Posterior cingulate gyrus (tissue), 11 donors: ENCODE measurements at regions of chr14 and their contacts with region 1.

Region 1: DNA sequence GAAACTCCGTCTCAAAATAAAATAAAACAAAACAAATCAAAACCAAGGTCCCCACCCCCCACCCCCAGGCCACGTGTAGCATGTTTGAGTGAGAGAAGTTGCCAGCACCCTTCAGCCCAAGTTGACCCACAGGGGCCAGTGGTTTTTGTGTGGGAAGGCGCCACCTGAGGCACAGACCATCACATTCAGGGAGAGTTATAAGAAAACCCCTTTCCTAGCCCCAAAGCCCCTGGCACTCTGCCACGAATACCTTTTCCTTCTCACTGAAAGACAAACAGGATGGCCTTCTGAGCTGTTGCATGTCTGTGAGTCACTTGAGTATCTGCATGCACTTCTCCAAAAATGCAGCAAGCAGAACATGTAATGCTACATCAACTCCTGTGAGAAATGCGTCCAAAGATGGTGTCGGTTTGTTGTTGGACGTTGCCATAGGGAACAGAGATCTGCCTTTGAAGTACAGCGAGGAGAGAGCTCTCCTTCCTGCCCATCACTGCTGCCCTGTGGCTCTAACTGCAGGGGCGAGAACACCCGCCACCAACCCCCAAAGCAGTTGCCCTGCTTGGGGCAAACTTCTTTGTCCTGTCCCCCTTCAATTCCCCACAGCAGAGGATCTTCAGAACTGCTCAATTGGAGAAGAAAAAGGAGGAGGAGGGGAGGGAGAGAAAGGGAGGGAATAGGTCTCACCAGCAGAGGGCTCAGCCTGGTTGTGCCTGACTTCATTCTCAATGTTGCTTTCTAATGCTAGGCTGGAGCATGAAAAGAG is 2.7 kb upstream of the TRAF3 start:
- DNase-seq: peak in 8 of 10 donors; percentile 26 to 91 (median 64)

Region 2: GRCh38 chr14:102900631-102901571 is 126.3 kb after region 1 on chr14:
- intact Hi-C with region 1: no loop called
- DNase-seq: no peak

Region 3: DNA sequence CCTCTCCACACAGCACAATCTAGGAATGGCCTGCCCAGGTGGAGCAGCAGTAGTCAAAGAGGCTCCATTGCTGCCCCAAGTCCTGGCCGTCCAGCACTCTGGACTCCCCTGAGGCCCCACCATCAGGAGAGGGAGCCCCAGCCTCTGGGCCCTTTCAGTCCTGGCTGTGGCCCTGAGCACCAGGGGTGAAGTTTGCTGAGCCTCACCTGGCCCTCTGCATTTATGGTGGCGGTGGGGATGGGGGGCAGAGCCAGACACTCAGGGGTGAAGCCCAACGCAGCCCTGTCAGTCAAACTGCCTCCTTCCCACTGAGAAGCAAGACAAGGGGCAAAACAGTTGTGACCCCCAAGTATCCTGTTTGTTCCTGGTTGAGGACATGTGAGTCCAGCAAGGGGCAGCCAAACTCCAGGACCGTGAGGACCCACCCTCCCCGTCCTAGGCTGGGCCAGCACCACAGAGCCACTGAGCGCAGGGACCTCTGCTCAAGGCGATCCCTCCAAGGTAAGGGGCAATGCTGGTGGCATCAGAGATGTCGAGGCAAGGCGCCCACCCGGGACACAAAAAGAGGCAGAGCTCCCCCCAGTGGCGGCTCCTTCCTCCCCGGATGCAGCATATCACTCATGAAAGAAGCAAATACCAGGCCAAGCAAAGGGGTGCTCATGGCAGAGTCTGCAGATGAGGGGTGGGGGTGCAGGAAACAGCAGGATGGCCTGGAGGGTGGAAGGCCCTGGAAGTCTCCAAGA is 143.1 kb after region 1 on chr14:
- intact Hi-C with region 1: loop called (anchors 10 kb)
- DNase-seq: peak in 8 of 10 donors; percentile 52 to 94 (median 60)

Region 4: DNA sequence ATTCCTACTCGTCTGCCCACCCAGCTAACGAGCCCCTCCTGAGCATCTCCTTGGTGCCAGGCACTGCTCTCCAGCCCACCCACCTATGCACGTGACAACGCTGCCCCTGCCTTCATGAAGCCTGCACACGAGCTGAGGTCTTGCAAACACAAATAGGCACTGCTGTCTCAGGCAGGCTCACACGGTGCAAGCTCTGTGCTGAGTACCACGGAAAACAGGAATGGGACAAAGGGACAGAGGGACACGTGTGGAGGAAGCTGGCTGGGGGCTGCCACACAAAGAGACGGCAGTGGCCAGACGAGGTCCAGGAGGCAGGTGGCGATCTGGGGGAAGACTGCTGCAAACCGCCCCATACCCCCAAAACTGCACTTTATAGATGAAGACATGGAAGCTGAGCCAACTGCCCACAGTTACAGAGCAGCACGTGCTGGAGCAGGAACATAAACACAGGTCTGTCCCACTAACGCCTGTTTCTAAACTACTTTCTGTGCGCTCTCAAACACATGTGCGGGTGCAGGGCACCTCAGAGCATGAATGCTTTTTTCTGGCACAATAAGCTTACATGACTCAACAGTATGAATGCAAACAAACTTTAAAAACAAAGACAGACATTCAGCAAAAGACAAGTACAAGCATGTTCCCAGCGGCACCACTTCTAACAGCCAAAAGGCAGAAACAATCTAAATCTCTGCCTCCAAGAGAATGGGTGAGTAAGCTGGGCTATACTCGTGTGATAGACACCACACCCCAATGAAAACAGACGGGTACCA is 212.4 kb after region 1 on chr14:
- intact Hi-C with region 1: loop called (anchors 2 kb)
- DNase-seq: peak in 1 of 10 donors; percentile 83

Region 5: DNA sequence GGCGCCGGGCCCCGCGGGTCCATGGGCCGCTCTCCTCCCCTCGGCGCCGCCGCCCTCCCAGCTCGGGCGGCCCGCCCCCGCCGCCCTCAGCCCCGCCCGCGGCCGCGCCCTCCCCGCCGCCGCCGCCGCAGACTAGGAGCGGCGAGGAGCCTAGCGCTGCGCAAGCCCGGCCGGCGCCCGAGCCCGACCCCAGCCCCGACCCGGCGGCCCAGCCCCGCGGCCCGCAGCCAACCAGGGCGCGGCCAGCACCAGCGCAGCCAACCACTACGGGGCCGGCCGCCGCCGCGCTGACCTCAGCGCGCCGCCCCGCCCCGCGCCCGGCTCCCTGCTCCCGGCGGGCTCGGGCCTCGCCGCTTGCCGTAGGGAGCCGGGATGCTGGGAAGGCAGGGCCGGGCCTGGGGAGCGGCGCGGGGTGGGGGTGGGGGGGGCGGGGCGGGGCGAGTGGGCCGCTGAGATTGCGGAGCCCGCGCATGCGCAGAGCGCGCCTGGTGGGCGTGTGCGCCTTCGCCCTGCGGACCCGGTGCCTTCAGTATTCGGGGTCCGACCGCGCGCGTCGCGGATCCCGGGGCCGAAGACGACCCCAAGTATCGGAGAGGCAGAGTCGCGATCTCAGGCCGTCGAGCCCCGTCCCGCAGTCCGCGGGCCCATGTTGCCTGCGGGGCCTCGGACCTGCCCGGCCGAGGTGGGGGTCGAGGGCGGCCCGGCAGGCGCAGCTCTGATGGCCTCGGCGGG is 283.0 kb after region 1 on chr14 and contains the start of gene CDC42BPB:
- intact Hi-C with region 1: loop called (anchors 5 kb)
- DNase-seq: peak; percentile 77 to 98 (median 84)